Naive thymus-derived CD4-positive, alpha-beta T cell (primary cell): ENCODE measurements at regions of chr1 and their contacts with region 1.

Region 1: GRCh38 chr1:89298461-89298860 is 25.8 kb upstream of the GBP5 start:
- DNase-seq: no peak
- ATAC-seq: no peak
- H3K4me3 ChIP-seq: no peak overlapping the region
- H3K4me3 Mint-ChIP-seq: peak overlapping the region in 1 of 10 donors; percentile 57
- H3K27ac ChIP-seq: no peak overlapping the region
- H3K27ac Mint-ChIP-seq: peak overlapping the region in 4 of 9 donors; percentile 6 to 75 (median 59)
- H3K4me1 ChIP-seq: peaks cover 6 to 19% of the 10 kb centered on the region in 2 donors
- H3K4me1 Mint-ChIP-seq: peaks cover 16 to 71% (median 44%) of the 10 kb centered on the region in 7 donors
- H3K27me3 ChIP-seq: no peaks in the 10 kb centered on the region
- H3K27me3 Mint-ChIP-seq: no peaks in the 10 kb centered on the region

Region 2: GRCh38 chr1:89280766-89281165 is 17.7 kb before region 1 on chr1:
- CTCF ChIA-PET with region 1: no interaction called
- POLR2A ChIA-PET with region 1: interaction called, 7 read pairs
- intact Hi-C with region 1: loop called in 1 of 2 experiments (anchors 2 kb)
- DNase-seq: no peak
- ATAC-seq: no peak
- H3K4me3 ChIP-seq: no peak overlapping the region
- H3K4me3 Mint-ChIP-seq: peak overlapping the region in 3 of 10 donors; percentile 31 to 54 (median 32)
- H3K27ac ChIP-seq: no peak overlapping the region
- H3K27ac Mint-ChIP-seq: peak overlapping the region in 7 of 9 donors; percentile 6 to 94 (median 52)
- H3K4me1 ChIP-seq: peaks cover 64 to 78% of the 10 kb centered on the region in 2 donors
- H3K4me1 Mint-ChIP-seq: peaks cover 49 to 92% (median 81%) of the 10 kb centered on the region in 7 donors
- H3K27me3 ChIP-seq: no peaks in the 10 kb centered on the region
- H3K27me3 Mint-ChIP-seq: no peaks in the 10 kb centered on the region

Region 3: DNA sequence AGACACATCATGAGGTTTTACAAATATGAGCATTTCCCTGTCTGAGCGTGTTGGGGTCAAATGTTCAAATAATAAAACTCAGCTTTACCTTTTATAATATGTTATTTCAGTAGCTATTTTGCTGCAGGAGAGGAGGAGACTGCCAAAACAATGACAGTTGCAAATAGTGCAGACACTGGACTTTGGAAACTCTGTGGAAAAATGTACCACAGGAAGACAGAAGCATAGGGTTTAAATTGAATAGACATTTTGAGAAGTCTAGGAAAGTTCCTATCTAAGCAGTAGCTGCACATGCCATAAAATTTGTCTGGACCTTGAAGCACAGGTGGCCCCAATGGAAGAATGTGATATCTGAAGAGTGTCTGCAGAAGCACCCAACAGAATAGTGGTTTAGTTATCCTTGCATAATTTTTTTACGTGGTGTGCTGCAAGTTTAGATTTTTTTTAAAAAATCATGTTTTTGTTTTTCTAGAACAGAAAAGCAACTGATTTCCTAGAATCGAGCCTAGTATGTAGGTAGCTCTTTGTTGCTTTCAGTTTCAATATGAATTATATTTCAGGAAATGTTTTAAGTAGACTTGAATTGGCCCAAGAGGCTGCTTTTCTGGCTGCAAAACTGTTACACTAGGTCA is 11.8 kb before region 1 on chr1:
- CTCF ChIA-PET with region 1: interaction called, 5 read pairs
- POLR2A ChIA-PET with region 1: interaction called, 3 read pairs
- intact Hi-C with region 1: loop called (anchors 1 to 2 kb)
- DNase-seq: peak in 6 of 9 donors; percentile 25 to 65 (median 48)
- ATAC-seq: peak; percentile 77
- H3K4me3 ChIP-seq: peak overlapping the region; percentile 41
- H3K4me3 Mint-ChIP-seq: peak overlapping the region; percentile 63 to 83 (median 76)
- H3K27ac ChIP-seq: peak overlapping the region; percentile 63
- H3K27ac Mint-ChIP-seq: peak overlapping the region; percentile 76 to 96 (median 91)
- H3K4me1 ChIP-seq: peaks cover 40 to 52% of the 10 kb centered on the region in 2 donors
- H3K4me1 Mint-ChIP-seq: peaks cover 48 to 78% (median 74%) of the 10 kb centered on the region in 7 donors
- H3K27me3 ChIP-seq: no peaks in the 10 kb centered on the region
- H3K27me3 Mint-ChIP-seq: no peaks in the 10 kb centered on the region